ENCODE measurements at regions of chr16 and their contacts with region 1.

Region 1: GRCh38 chr16:16120382-16121184 is 102.7 kb downstream of the ABCC6 start:
- DNase-seq: peak; percentile 98
- H3K4me3 ChIP-seq: peak overlapping the region in 1 of 3 experiments; percentile 4
- H3K27ac ChIP-seq: peak overlapping the region; percentile 83
- H3K4me1 ChIP-seq: peaks cover 19% of the 10 kb centered on the region
- H3K27me3 ChIP-seq: no peaks in the 10 kb centered on the region
- CTCF ChIP-seq: no peak
- POLR2A ChIP-seq: peak; percentile 81

Region 2: GRCh38 chr16:15961060-15961511 is 159.5 kb before region 1 on chr16:
- CTCF ChIA-PET with region 1: no interaction called
- POLR2A ChIA-PET with region 1: interaction called, 4 read pairs
- dilution Hi-C with region 1: no loop called
- intact Hi-C with region 1: loop called (anchors 1 kb)
- DNase-seq: peak; percentile 77
- H3K4me3 ChIP-seq: no peak overlapping the region
- H3K27ac ChIP-seq: peak overlapping the region; percentile 43
- H3K4me1 ChIP-seq: peaks cover 49% of the 10 kb centered on the region
- H3K27me3 ChIP-seq: no peaks in the 10 kb centered on the region
- CTCF ChIP-seq: no peak
- POLR2A ChIP-seq: no peak

Region 3: GRCh38 chr16:15988268-15989013 is 132.1 kb before region 1 on chr16:
- CTCF ChIA-PET with region 1: no interaction called
- POLR2A ChIA-PET with region 1: no interaction called
- dilution Hi-C with region 1: no loop called
- intact Hi-C with region 1: loop called (anchors 1 kb)
- DNase-seq: peak; percentile 85
- H3K4me3 ChIP-seq: no peak overlapping the region
- H3K27ac ChIP-seq: peak overlapping the region; percentile 93
- H3K4me1 ChIP-seq: peaks cover 43% of the 10 kb centered on the region
- H3K27me3 ChIP-seq: no peaks in the 10 kb centered on the region
- CTCF ChIP-seq: no peak
- POLR2A ChIP-seq: no peak

Region 4: GRCh38 chr16:16014329-16015144 is 106.0 kb before region 1 on chr16:
- CTCF ChIA-PET with region 1: no interaction called
- POLR2A ChIA-PET with region 1: no interaction called
- dilution Hi-C with region 1: no loop called
- intact Hi-C with region 1: no loop called
- DNase-seq: peak; percentile 50
- H3K4me3 ChIP-seq: no peak overlapping the region
- H3K27ac ChIP-seq: no peak overlapping the region
- H3K4me1 ChIP-seq: no peaks in the 10 kb centered on the region
- H3K27me3 ChIP-seq: no peaks in the 10 kb centered on the region
- CTCF ChIP-seq: no peak
- POLR2A ChIP-seq: no peak

Region 5: DNA sequence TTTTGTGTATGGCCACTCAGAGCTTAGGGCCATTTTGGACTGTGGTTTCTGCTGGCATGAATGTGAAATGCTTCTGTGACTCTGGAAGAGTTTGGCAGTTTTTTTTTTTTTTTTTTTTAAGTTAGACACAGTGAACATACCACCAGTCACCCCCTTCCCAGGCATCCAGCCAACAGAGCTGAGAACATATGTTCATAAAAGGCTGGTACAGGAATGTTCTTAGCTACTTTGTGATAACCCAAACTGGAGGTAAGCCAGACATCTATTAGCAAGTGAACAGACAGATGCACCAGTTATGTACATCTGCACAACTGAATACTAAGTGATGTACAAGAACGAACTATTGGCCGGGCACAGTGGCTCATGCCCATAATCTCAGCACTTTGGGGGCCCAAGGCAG is 78.5 kb before region 1 on chr16:
- CTCF ChIA-PET with region 1: no interaction called
- POLR2A ChIA-PET with region 1: no interaction called
- dilution Hi-C with region 1: no loop called
- intact Hi-C with region 1: loop called (anchors 5 kb)
- DNase-seq: peak; percentile 54
- H3K4me3 ChIP-seq: no peak overlapping the region
- H3K27ac ChIP-seq: no peak overlapping the region
- H3K4me1 ChIP-seq: peaks cover 10% of the 10 kb centered on the region
- H3K27me3 ChIP-seq: no peaks in the 10 kb centered on the region
- CTCF ChIP-seq: no peak
- POLR2A ChIP-seq: no peak

Region 6: DNA sequence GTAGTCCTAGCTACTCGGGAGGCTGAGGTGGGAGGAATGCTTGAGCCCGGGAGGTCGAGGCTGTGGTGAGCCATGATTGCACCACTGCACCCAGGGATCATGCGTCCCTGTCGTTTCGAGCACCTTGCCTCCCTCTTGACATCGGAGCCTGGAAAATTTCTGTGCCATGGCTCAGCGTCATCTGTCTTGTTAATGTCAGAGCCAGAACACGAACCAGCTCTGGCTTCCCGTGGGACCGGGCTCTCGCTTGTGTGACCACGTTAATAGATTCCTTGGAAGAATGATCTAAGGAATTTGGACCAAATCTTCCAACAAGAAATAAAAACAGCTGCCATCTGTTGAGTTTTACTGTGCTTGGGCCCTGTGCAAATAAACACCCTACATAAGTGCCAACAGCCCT is 53.5 kb before region 1 on chr16:
- CTCF ChIA-PET with region 1: no interaction called
- POLR2A ChIA-PET with region 1: no interaction called
- dilution Hi-C with region 1: no loop called
- intact Hi-C with region 1: no loop called
- DNase-seq: no peak
- H3K4me3 ChIP-seq: no peak overlapping the region
- H3K27ac ChIP-seq: no peak overlapping the region
- H3K4me1 ChIP-seq: no peaks in the 10 kb centered on the region
- H3K27me3 ChIP-seq: no peaks in the 10 kb centered on the region
- CTCF ChIP-seq: no peak
- POLR2A ChIP-seq: no peak